H1 (cell line): ENCODE measurements at regions of chr20 and their contacts with region 1.

Region 1: DNA sequence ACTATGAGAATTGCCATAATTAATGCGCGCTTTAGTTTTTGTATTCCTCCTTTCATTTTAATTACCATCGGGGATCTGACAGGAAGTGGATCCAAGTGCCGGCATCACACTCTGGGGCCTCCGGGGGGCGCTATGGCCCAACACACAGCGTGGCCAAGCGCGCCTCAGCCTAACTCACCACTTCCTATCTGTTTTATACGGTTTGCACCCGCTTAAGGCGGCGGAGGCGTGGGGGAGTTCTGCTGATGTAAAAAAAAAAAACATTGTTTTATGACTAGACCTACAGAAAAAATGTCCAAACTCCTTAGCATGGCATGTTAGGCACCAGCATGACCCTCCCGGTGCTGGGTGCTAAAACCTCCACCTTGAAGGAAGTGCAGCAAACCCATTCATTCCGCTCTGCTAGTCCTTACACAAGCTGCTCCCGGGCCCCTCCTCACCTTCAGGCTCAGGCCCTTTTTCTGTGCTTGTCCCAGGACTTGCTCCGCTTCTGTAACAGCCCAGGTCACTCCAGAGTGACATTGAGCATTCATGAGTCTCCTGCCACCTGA is 4.5 kb upstream of the EBF4 start:
- DNase-seq: peak in 1 of 2 experiments; percentile 77
- H3K4me3 ChIP-seq: peak overlapping the region in 2 of 4 experiments; percentile 10 to 50; a peak in 2 of 8 replicates
- H3K27ac ChIP-seq: no peak overlapping the region
- H3K4me1 ChIP-seq: peaks cover 3 to 15% (median 6%) of the 10 kb centered on the region in 4 experiments
- H3K27me3 ChIP-seq: peaks cover 30 to 44% (median 41%) of the 10 kb centered on the region in 4 experiments
- CTCF ChIP-seq: peak; percentile 86 to 91 (median 89)
- EP300 ChIP-seq: no peak
- POLR2A ChIP-seq: no peak
- RAD21 ChIP-seq: peak; percentile 95 to 96

Region 2: GRCh38 chr20:2629651-2630050 is 58.5 kb before region 1 on chr20:
- CTCF ChIA-PET with region 1: no interaction called
- POLR2A ChIA-PET with region 1: no interaction called
- DNase-seq: no peak
- H3K4me3 ChIP-seq: no peak overlapping the region
- H3K27ac ChIP-seq: no peak overlapping the region
- H3K4me1 ChIP-seq: no peaks in the 10 kb centered on the region
- H3K27me3 ChIP-seq: no peaks in the 10 kb centered on the region; a peak in 1 of 7 replicates
- CTCF ChIP-seq: no peak
- EP300 ChIP-seq: no peak
- POLR2A ChIP-seq: no peak
- RAD21 ChIP-seq: no peak

Region 3: GRCh38 chr20:2671977-2672376 is 16.1 kb before region 1 on chr20:
- CTCF ChIA-PET with region 1: interaction called, 12 read pairs
- POLR2A ChIA-PET with region 1: no interaction called
- DNase-seq: peak in 1 of 2 experiments; percentile 72
- H3K4me3 ChIP-seq: no peak overlapping the region
- H3K27ac ChIP-seq: no peak overlapping the region
- H3K4me1 ChIP-seq: 0 out of 7 replicates have a peak, but pooled peaks cover 0 to 4% (median 0%) of the 10 kb centered on the region in 4 experiments
- H3K27me3 ChIP-seq: no peaks in the 10 kb centered on the region; a peak in 3 of 7 replicates
- CTCF ChIP-seq: peak; percentile 69 to 81 (median 80)
- EP300 ChIP-seq: no peak
- POLR2A ChIP-seq: no peak
- RAD21 ChIP-seq: peak; percentile 20 to 47; a peak in 2 of 4 replicates

Region 4: DNA sequence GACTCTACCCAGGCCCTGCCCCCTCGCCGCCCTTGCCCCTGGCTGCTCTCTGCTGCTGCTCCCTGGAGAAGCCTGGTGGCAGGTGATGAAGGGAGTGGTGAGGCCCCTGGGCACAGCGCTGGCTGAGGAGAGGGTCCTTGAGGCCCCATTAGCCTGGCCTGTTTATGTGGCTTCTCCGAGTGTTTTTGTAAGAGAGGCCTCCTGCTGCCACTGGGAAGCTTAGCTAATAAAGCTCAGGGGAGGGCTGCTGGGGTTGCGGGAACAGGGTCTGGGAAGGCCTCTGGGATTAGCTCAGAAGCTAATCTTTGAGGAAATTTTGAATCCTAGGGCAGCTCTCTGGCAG is 19.9 kb after region 1 on chr20:
- CTCF ChIA-PET with region 1: interaction called, 22 read pairs
- POLR2A ChIA-PET with region 1: interaction called, 5 read pairs
- DNase-seq: no peak
- H3K4me3 ChIP-seq: no peak overlapping the region
- H3K27ac ChIP-seq: no peak overlapping the region
- H3K4me1 ChIP-seq: peaks cover 0 to 46% (median 24%) of the 10 kb centered on the region in 4 experiments; a peak in 6 of 7 replicates
- H3K27me3 ChIP-seq: peaks cover 0 to 24% (median 14%) of the 10 kb centered on the region in 4 experiments; a peak in 5 of 7 replicates
- CTCF ChIP-seq: no peak
- EP300 ChIP-seq: no peak
- POLR2A ChIP-seq: no peak
- RAD21 ChIP-seq: no peak

Region 5: GRCh38 chr20:2713285-2713684 is 25.2 kb after region 1 on chr20:
- CTCF ChIA-PET with region 1: interaction called, 22 read pairs
- POLR2A ChIA-PET with region 1: interaction called, 5 read pairs
- DNase-seq: no peak
- H3K4me3 ChIP-seq: no peak overlapping the region
- H3K27ac ChIP-seq: no peak overlapping the region
- H3K4me1 ChIP-seq: peaks cover 2 to 14% (median 5%) of the 10 kb centered on the region in 4 experiments; a peak in 5 of 7 replicates
- H3K27me3 ChIP-seq: peaks cover 0 to 2% (median 0%) of the 10 kb centered on the region in 4 experiments; a peak in 1 of 7 replicates
- CTCF ChIP-seq: peak in 2 of 3 experiments; percentile 48 to 64; a peak in 2 of 4 replicates
- EP300 ChIP-seq: no peak
- POLR2A ChIP-seq: no peak
- RAD21 ChIP-seq: peak; percentile 62 to 70

Region 6: GRCh38 chr20:2729251-2729713 is 41.2 kb after region 1 on chr20:
- CTCF ChIA-PET with region 1: interaction called, 13 read pairs
- POLR2A ChIA-PET with region 1: no interaction called
- DNase-seq: no peak
- H3K4me3 ChIP-seq: no peak overlapping the region
- H3K27ac ChIP-seq: no peak overlapping the region
- H3K4me1 ChIP-seq: no peaks in the 10 kb centered on the region
- H3K27me3 ChIP-seq: no peaks in the 10 kb centered on the region
- CTCF ChIP-seq: no peak
- EP300 ChIP-seq: no peak
- POLR2A ChIP-seq: no peak
- RAD21 ChIP-seq: no peak

Region 7: GRCh38 chr20:2742934-2743559 is 54.9 kb after region 1 on chr20:
- CTCF ChIA-PET with region 1: interaction called, 133 read pairs
- POLR2A ChIA-PET with region 1: interaction called, 3 read pairs
- DNase-seq: peak; percentile 62 to 85
- H3K4me3 ChIP-seq: no peak overlapping the region
- H3K27ac ChIP-seq: no peak overlapping the region
- H3K4me1 ChIP-seq: peaks cover 2 to 11% (median 6%) of the 10 kb centered on the region in 4 experiments
- H3K27me3 ChIP-seq: peaks cover 0 to 30% (median 9%) of the 10 kb centered on the region in 4 experiments; a peak in 6 of 7 replicates
- CTCF ChIP-seq: peak; percentile 95 to 96 (median 95)
- EP300 ChIP-seq: no peak
- POLR2A ChIP-seq: no peak
- RAD21 ChIP-seq: peak; percentile 82 to 89

Region 8: DNA sequence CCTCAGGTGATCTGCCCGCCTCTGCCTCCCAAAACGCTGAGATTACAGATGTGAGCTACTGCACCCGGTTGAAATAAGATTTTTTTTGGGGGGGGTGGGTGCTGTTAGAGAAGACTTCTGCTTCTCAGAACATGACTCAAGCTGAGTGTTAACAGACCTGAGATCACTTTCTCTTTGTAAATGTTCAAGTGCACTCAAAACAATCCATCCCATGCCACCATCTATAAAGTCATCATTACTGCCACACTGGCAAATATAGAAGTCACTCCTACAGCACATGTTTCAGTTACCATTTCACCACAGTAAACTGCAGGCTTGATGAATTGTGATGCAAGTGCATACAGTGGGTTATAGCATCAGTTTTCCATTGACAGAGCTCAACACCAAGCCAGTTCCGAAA is 161.4 kb after region 1 on chr20:
- CTCF ChIA-PET with region 1: interaction called, 11 read pairs
- POLR2A ChIA-PET with region 1: no interaction called
- DNase-seq: no peak
- H3K4me3 ChIP-seq: no peak overlapping the region
- H3K27ac ChIP-seq: no peak overlapping the region
- H3K4me1 ChIP-seq: peaks cover 0 to 4% (median 0%) of the 10 kb centered on the region in 4 experiments; a peak in 3 of 7 replicates
- H3K27me3 ChIP-seq: no peaks in the 10 kb centered on the region
- CTCF ChIP-seq: no peak
- EP300 ChIP-seq: no peak
- POLR2A ChIP-seq: no peak
- RAD21 ChIP-seq: no peak